ENCODE measurements at regions of chr10 and their contacts with region 1.

Region 1: DNA sequence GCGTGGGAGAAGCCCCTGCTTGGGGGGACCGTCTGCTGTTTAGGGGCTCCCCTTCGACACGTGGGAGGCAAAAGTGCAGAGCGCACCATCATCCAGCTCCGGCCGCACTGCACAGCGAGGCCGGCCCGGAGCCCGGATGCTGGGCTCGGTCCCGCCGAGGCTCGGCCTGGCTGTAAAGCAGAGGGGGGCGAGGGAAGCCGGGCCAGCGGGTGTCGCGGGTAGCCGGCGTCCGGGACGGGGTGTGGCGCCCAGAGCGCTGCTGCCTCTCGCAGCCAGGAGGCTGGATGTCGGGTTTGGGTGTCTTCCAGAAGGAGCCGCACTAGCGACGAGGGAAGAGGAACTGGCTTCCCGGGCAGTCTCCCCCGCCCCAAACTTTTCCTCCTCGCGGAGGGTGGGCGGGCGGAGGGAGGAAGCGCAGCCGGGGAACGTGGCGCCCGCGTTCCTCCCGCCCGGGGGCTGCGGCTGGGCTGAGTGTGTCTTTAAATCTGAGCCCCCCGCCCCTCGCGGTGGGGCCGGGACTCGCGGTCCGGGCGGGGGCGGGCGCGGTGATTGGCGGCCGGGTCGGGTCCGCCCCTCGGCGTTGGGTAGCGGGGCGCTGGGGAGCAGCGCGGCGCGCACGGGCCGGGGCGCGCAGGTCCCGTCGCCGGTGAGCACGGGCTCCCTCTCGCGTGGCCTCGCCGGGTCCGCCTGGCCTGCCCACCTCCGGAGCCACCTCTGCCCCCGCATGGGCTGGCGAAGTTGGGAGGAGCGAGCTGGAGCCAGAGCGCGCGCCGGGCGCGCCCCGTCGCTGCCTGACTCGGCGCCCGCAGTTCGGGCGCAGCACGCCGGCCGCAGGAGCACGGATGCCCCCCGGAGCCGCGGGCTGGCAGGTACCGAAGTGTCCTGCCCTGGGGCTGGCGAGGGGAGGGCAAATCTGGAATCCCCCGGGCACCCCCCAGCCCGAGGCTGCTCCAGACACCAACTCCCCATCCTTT is at the start of gene PALD1:
- DNase-seq: peak; percentile 76
- H3K4me3 Mint-ChIP-seq: peak within 1 kb of the TSS; percentile 84
- H3K27ac Mint-ChIP-seq: peak within 1 kb of the TSS; percentile 84
- H3K4me1 Mint-ChIP-seq: peaks cover 37% of the 10 kb centered on the region
- H3K27me3 Mint-ChIP-seq: peaks cover 63% of the 10 kb centered on the region
- total RNA-seq, gene PALD1: 1.9 and 2.1 TPM in 2 replicates

Region 2: DNA sequence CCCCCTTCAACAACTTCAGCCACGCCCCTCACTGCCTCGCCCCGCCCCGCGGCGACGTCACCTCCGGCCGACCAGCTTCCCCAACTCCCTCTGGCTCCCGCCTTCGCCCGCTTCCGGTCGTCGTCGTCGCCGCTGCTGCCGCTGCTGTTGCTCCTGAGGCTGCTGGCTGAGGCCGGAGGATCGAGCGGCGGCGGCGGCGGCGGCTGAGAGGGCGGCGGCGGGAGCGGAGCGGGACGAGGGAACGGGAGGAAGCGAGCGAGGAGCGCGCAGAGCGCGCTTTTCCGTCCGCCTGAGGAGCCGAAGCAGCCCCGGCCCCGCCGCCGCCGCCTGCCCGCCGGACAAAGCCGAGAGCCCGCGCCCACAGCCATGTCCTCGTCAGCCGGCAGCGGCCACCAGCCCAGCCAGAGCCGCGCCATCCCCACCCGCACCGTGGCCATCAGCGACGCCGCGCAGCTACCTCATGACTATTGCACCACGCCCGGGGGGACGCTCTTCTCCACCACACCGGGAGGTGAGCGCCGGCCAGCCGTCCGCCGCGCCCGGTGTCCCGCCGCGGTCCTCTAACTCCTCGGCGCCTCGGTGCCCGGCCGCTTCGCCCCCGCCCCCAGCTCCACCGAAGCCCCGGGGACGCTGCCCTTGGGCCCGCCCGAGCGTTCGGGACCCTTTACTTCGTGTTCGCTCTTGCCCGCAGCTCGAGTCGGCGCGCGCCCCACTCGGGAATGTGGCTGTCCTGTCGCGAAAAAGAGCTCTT is 74.3 kb before region 1 on chr10 and contains the start of gene EIF4EBP2:
- intact Hi-C with region 1: loop called (anchors 2 kb)
- DNase-seq: peak; percentile 100
- H3K4me3 Mint-ChIP-seq: peak within 1 kb of the TSS; percentile 98
- H3K27ac Mint-ChIP-seq: peak within 1 kb of the TSS; percentile 96
- H3K4me1 Mint-ChIP-seq: peaks cover 36% of the 10 kb centered on the region
- H3K27me3 Mint-ChIP-seq: peaks cover 2% of the 10 kb centered on the region
- total RNA-seq, gene EIF4EBP2: 37.6 and 38.3 TPM in 2 replicates

Region 3: GRCh38 chr10:70493660-70494234 is 15.3 kb after region 1 on chr10:
- intact Hi-C with region 1: loop called (anchors 1 kb)
- DNase-seq: peak; percentile 63
- H3K4me3 Mint-ChIP-seq: no peak overlapping the region
- H3K27ac Mint-ChIP-seq: peak overlapping the region; percentile 25
- H3K4me1 Mint-ChIP-seq: peaks cover 23% of the 10 kb centered on the region
- H3K27me3 Mint-ChIP-seq: peaks cover 19% of the 10 kb centered on the region

Region 4: GRCh38 chr10:70880077-70880534 is 401.6 kb after region 1 on chr10:
- intact Hi-C with region 1: loop called (anchors 10 kb)
- DNase-seq: peak; percentile 92
- H3K4me3 Mint-ChIP-seq: no peak overlapping the region
- H3K27ac Mint-ChIP-seq: no peak overlapping the region
- H3K4me1 Mint-ChIP-seq: peaks cover 11% of the 10 kb centered on the region
- H3K27me3 Mint-ChIP-seq: no peaks in the 10 kb centered on the region

Measured in activated CD4-positive, alpha-beta T cell treated with anti-CD3 and anti-CD28 coated beads, Interleukin-2, amount 10 ng/mL, durations not matched to agents 24 days and 14 days (primary cell).